Stomach (tissue), 19 donors: ENCODE measurements at regions of chr22 and their contacts with region 1.

Region 1: GRCh38 chr22:50250555-50251476 is at the start of gene HDAC10:
- DNase-seq: peak; percentile 90 to 95
- H3K4me3 ChIP-seq: peak within 1 kb of the TSS; percentile 62 to 78 (median 66)
- H3K27ac ChIP-seq: peak within 1 kb of the TSS; percentile 71 to 84 (median 83)
- H3K4me1 ChIP-seq: peaks cover 34 to 65% (median 60%) of the 10 kb centered on the region in 4 donors
- H3K27me3 ChIP-seq: no peaks in the 10 kb centered on the region
- CTCF ChIP-seq: no peak
- EP300 ChIP-seq: no peak
- POLR2A ChIP-seq: no peak
- total RNA-seq, gene HDAC10: 15.4 to 156 (median 74.1) TPM

Region 2: DNA sequence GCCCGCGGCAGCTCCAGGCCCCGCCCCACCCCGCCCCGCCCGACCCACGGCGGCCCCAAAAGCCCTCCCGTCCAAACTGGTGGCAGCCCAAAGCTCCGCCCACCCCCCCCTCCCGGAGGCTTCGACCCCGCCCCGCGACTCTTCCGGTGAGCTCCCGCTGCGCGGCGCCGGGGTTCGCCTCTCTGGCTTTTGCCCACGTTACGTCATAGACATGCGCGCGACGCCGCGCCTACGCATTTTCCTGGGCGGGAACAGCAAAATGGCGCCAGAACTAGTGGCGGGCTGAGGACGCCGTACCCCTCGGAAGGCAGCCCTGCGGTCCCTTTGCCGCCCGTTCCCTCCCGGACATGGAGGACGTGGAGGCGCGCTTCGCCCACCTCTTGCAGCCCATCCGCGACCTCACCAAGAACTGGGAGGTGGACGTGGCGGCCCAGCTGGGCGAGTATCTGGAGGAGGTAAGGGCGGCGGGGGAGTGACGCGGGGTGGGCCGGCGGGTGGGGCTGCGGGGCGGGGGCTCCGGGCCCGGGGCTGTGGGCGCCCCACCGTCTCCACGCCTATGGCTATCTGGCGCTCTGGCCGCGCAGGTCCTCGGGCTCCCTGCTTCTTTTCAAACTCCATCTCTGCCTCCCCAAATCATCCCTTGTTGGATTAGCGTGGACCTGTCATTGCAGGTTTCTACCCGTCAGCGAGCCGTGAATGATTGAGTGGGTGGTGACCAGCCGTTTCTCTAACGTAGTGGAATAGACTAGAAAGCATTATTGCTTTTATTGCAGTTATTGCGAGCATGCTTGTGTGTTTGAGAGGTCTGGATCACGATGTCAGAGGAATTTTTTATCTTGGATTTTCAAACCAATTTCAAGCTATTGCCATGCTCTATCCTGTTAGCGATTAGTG is 257.4 kb after region 1 on chr22 and contains the start of gene NCAPH2:
- intact Hi-C with region 1: loop called (anchors 10 kb)
- DNase-seq: peak; percentile 98 to 99
- H3K4me3 ChIP-seq: peak within 1 kb of the TSS; percentile 81 to 99 (median 93)
- H3K27ac ChIP-seq: peak within 1 kb of the TSS; percentile 91 to 99 (median 98)
- H3K4me1 ChIP-seq: peaks cover 23 to 50% (median 40%) of the 10 kb centered on the region in 4 donors
- H3K27me3 ChIP-seq: no peaks in the 10 kb centered on the region
- CTCF ChIP-seq: no peak
- EP300 ChIP-seq: no peak
- POLR2A ChIP-seq: peak in 2 of 4 donors; percentile 38 to 44
- total RNA-seq, gene NCAPH2: 12.9 to 34.8 (median 23.2) TPM